Activated CD4-positive, alpha-beta memory T cell treated with anti-CD3 and anti-CD28 coated beads for 36 hours (primary cell): ENCODE measurements at regions of chr1 and their contacts with region 1.

Region 1: DNA sequence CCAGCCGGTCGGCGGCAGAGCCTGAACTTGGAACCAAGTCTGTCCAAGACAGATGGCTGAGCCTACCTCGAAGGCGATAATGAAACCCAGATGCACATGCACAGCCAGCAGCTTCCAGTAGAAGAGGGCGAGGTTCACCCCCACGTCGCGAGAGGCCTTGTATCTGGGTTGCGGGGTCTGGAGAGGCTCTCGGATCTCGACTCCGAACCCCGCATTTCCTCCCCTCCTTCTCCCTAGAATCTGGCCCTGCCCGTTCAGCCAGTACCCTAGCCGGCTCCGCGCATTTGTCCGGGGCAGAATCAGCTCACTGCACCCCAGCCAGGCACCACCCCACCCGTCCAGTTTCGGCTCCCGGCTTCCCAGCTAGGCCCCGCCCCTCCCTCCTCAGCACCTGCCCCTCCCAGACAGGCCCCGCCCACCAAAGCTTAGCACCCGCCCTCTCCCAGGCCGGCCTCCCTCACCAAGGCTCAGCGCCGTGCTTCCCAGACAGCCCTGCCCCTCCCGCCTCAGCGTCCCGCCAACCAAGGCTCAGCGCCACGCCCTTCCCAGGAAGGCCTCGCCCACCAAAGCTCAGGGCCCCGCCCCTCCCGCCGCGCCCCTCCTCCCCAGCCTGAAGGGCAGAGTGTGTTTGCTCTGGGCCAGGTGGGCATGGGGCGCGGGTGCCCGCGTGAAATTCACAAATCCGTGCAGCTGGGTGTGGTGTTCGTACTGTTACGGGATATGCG is 4.8 kb upstream of the ARHGEF19 start:
- DNase-seq: peak; percentile 98
- H3K4me3 Mint-ChIP-seq: peak overlapping the region; percentile 81
- H3K27ac Mint-ChIP-seq: no peak overlapping the region
- H3K4me1 Mint-ChIP-seq: peaks cover 10% of the 10 kb centered on the region
- H3K27me3 Mint-ChIP-seq: peaks cover 2% of the 10 kb centered on the region

Region 2: GRCh38 chr1:15409388-15410222 is 807.6 kb before region 1 on chr1 and contains the start of gene EFHD2:
- CTCF ChIA-PET with region 1: no interaction called
- POLR2A ChIA-PET with region 1: no interaction called
- intact Hi-C with region 1: no loop called
- DNase-seq: peak; percentile 86
- H3K4me3 Mint-ChIP-seq: peak within 1 kb of the TSS; percentile 92
- H3K27ac Mint-ChIP-seq: peak within 1 kb of the TSS; percentile 81
- H3K4me1 Mint-ChIP-seq: peaks cover 34% of the 10 kb centered on the region
- H3K27me3 Mint-ChIP-seq: no peaks in the 10 kb centered on the region
- total RNA-seq, gene EFHD2: 60.4 to 61.3 TPM

Region 3: DNA sequence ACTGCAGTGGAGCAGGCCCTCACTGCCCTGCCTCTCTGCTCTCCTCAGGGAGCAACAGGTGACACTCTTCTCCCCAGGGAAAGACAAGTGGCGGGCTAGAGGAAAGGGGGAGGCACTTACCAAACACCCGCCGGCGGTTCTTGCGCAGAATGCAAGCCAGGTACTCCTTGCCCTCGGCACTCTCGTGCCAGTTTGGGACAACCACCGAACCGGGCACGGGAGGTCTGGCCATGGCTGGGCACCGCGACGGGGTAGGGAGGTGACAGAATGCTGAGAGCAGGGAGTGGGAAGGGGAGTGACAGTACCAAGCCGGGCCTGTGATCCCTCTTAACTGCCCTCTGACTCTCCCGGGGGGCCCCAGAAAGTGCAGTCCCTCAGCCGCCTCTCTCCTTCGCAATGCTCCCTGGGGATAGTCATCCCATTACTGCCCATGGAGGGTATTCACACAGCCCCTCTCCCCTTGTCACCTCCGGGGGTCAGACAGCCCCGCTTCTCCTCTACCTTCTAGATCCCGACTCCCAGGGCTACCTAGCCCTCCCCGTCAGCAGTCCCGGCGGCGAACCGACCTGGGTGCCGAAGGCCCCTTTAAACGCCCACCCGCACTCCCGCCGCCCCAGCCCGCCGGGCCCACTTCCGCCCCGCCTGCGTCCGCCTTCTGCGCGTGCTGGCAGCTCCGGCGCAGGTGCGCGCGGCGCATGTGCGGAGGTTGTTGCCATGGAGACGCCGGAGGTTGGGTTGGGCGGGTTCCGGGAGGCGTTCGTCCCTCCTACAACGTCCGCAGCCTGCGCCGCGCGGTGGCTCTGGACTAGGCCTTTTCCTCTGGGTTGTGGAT is 19.5 kb after region 1 on chr1 and contains the start of gene CPLANE2:
- CTCF ChIA-PET with region 1: no interaction called
- POLR2A ChIA-PET with region 1: no interaction called
- intact Hi-C with region 1: loop called (anchors 1 kb)
- DNase-seq: peak; percentile 98
- H3K4me3 Mint-ChIP-seq: peak within 1 kb of the TSS; percentile 85
- H3K27ac Mint-ChIP-seq: peak within 1 kb of the TSS; percentile 82
- H3K4me1 Mint-ChIP-seq: peaks cover 17% of the 10 kb centered on the region
- H3K27me3 Mint-ChIP-seq: no peaks in the 10 kb centered on the region
- total RNA-seq, gene CPLANE2: 3.9 to 5.0 TPM

Region 4: DNA sequence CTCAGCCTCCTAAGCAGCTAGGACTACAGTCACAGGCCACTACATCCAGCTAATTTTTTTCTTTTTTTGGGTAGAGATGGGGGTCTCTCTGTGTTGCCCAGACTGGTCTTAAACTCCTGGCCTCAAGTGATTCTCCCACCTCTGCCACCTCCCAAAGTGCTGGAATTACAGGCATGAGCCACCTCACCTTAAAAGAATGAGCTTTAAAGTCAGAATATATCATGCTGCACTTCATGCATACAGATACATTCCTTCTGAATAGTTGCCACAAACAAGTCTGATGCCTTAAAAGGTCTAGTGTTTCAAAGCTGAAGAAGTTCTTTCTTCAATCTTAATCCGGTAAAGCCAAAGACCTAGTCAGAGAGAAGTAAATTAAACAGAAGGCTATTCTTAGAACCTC is 43.6 kb after region 1 on chr1:
- CTCF ChIA-PET with region 1: no interaction called
- POLR2A ChIA-PET with region 1: no interaction called
- intact Hi-C with region 1: no loop called
- DNase-seq: no peak
- H3K4me3 Mint-ChIP-seq: no peak overlapping the region
- H3K27ac Mint-ChIP-seq: no peak overlapping the region
- H3K4me1 Mint-ChIP-seq: no peaks in the 10 kb centered on the region
- H3K27me3 Mint-ChIP-seq: no peaks in the 10 kb centered on the region